ENCODE measurements at regions of chr5 and their contacts with region 1.

Region 1: GRCh38 chr5:34929150-34929719 is at the start of gene DNAJC21:
- DNase-seq: peak; percentile 98
- H3K4me3 ChIP-seq: peak within 1 kb of the TSS; percentile 93 to 94
- H3K27ac ChIP-seq: peak within 1 kb of the TSS; percentile 81 to 86
- H3K4me1 ChIP-seq: peaks cover 3 to 9% of the 10 kb centered on the region in 2 experiments; a peak in 3 of 4 replicates
- H3K27me3 ChIP-seq: no peaks in the 10 kb centered on the region
- CTCF ChIP-seq: no peak
- EP300 ChIP-seq: no peak
- RAD21 ChIP-seq: no peak
- polyA plus RNA-seq, gene DNAJC21: 8.8 and 9.7 TPM in 2 replicates

Region 2: GRCh38 chr5:34915139-34915855 is 13.9 kb before region 1 on chr5 and contains the starts of genes BRIX1 and RAD1:
- CTCF ChIA-PET with region 1: interaction called, 4 read pairs
- POLR2A ChIA-PET with region 1: interaction called, 32 read pairs
- DNase-seq: peak; percentile 90
- H3K4me3 ChIP-seq: peak within 1 kb of the TSS; percentile 96 to 100
- H3K27ac ChIP-seq: peak within 1 kb of the TSS; percentile 83 to 92
- H3K4me1 ChIP-seq: peaks cover 12 to 16% of the 10 kb centered on the region in 2 experiments
- H3K27me3 ChIP-seq: no peaks in the 10 kb centered on the region
- CTCF ChIP-seq: no peak
- EP300 ChIP-seq: peak in 1 of 2 experiments; percentile 55; a peak in 1 of 4 replicates
- RAD21 ChIP-seq: no peak
- polyA plus RNA-seq, gene BRIX1: 18.4 and 22.9 TPM in 2 replicates
- polyA plus RNA-seq, gene RAD1: 18.2 and 21.2 TPM in 2 replicates

Region 3: DNA sequence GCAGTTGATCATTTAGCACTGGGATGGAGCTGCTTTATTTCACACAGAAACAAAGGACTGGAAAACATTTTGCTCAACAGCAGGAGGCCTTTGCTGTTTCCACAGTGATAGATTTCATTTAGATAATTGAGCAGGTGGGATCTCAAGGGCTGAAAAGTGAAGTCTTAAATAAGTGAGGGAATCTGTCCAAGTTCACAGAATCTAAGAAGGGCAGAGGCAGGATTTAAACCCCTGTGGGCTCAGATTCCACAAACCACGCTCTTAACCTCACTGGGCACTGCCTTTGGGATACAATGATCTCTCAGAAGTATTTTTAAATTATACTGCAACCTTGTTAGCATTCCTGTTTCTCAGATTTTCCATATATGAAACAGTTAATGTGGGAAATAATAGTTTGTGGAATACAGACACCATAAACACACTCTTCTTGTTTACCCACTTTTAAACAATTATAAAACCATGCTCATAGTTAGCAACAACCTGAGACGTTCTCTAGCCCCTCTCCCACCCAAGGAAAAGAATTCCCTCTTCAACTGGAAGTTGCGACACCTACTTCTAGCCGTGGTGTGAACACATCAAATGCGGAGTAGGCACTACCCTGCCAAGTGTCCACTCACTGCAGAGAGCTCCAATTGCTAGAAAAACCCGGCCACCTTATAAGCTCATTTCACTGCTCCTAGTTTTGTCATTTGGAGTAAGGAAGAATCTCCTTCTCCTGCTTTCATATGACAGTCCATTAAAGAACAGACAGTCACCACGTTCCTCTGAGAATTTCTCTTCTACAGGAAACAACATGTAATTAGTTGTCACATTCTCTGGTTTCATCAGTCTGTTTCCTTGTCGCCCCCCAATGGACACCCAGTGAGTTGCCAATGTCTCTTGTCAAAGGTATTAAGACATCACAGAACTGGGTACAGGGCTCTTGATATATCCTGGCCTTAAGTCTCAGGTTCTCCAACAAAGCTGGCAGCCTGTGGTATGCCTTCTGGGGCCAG is 253.6 kb after region 1 on chr5:
- CTCF ChIA-PET with region 1: no interaction called
- POLR2A ChIA-PET with region 1: no interaction called
- DNase-seq: peak; percentile 31
- H3K4me3 ChIP-seq: no peak overlapping the region
- H3K27ac ChIP-seq: no peak overlapping the region
- H3K4me1 ChIP-seq: no peaks in the 10 kb centered on the region
- H3K27me3 ChIP-seq: peaks cover 8% of the 10 kb centered on the region; the same call in 1 of the 2 replicates
- CTCF ChIP-seq: peak; percentile 63
- EP300 ChIP-seq: no peak
- RAD21 ChIP-seq: peak; percentile 69

Measured in SK-N-SH (cell line).